GM10248 (cell line): ENCODE measurements at regions of chr18 and their contacts with region 1.

Region 1: DNA sequence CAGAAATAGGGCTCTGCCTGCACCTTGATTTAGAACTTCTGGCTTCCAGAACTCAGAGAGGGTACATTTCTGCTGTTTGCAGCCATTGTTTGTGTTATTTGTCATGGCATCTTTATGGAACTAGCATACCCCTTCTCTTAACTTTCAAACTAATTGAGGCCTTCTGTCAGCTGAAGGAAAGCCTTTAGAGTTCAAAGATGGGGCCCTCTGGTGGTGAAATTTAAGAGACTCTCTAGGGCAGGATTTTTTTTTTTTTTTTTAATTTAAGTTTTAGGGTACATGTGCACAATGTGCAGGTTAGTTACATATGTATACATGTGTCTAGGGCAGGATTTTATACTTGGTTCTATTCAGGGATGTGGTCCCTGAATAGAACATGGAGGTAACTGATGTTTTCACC is 260.6 kb upstream of the LINC00305 start:
- DNase-seq: peak; percentile 22
- CTCF ChIP-seq: peak; percentile 46

Region 2: DNA sequence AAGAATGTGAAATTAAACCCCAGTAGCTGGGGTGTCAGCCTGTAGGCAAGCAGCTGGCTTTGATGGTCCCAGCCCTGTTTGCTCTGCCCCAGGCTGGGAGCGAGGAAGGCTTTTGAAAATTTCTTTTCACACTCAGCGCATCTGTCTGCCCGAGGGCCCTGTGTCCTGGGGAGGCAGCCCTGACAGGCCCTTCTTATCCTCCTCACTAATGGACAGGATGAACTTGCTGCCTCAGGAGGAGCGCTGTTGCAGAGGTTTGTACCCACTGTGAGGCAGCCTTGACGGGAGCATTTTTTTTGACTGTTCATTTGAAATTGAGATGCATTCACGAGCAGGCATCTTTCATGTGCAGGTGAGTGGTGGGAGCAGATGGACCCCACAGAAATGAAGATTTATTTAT is 377.2 kb before region 1 on chr18:
- CTCF ChIA-PET with region 1: interaction called, 43 read pairs
- POLR2A ChIA-PET with region 1: no interaction called
- DNase-seq: no peak
- CTCF ChIP-seq: no peak

Region 3: GRCh38 chr18:64037812-64038414 is 371.6 kb before region 1 on chr18:
- CTCF ChIA-PET with region 1: interaction called, 43 read pairs
- POLR2A ChIA-PET with region 1: no interaction called
- DNase-seq: peak; percentile 38
- CTCF ChIP-seq: peak; percentile 40